ENCODE measurements at regions of chr3 and their contacts with region 1.

Region 1: GRCh38 chr3:106824856-106825255 is 552.4 kb upstream of the CCDC54 start:
- DNase-seq: peak in 3 of 7 donors; percentile 20 to 62 (median 24)
- H3K4me3 ChIP-seq: no peak overlapping the region
- H3K27ac ChIP-seq: no peak overlapping the region
- H3K4me1 ChIP-seq: no peaks in the 10 kb centered on the region
- H3K27me3 ChIP-seq: no peaks in the 10 kb centered on the region
- CTCF ChIP-seq: peak in 2 of 6 experiments; percentile 22 to 31
- POLR2A ChIP-seq: no peak

Region 2: GRCh38 chr3:107064445-107065060 is 239.7 kb after region 1 on chr3:
- intact Hi-C with region 1: loop called (anchors 10 kb)
- DNase-seq: peak; percentile 63 to 90 (median 73)
- H3K4me3 ChIP-seq: no peak overlapping the region
- H3K27ac ChIP-seq: no peak overlapping the region
- H3K4me1 ChIP-seq: peaks cover 3 to 13% of the 10 kb centered on the region in 2 donors
- H3K27me3 ChIP-seq: no peaks in the 10 kb centered on the region
- CTCF ChIP-seq: peak; percentile 64 to 86 (median 70)
- POLR2A ChIP-seq: no peak

Region 3: DNA sequence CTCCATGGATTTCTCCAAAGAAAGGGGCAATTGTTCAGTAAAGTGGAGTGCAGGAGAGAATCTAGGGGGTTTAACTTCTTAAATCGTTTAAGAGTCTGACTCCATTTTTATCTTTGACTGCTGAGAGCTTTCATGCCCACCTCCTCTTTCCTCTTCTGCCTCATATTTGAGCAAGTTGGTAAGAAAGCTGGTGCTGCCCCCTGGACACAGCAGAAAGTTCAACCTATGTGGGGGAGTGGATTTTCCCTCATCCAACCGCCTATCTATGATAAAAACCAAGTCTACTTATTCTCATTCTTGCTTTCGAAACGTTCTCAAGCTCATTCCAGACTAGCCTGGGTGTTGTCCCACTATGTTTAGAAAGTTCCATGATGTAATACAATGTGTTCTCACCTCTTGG is 1497.5 kb after region 1 on chr3:
- intact Hi-C with region 1: no loop called
- DNase-seq: no peak
- H3K4me3 ChIP-seq: no peak overlapping the region
- H3K27ac ChIP-seq: no peak overlapping the region
- H3K4me1 ChIP-seq: no peaks in the 10 kb centered on the region
- H3K27me3 ChIP-seq: peaks cover 5% of the 10 kb centered on the region
- CTCF ChIP-seq: no peak
- POLR2A ChIP-seq: no peak

Measured in adrenal gland (tissue), 19 donors.